Activated CD4-positive, alpha-beta T cell treated with anti-CD3 and anti-CD28 coated beads for 36 hours (primary cell): ENCODE measurements at regions of chr6 and their contacts with region 1.

Region 1: GRCh38 chr6:13661647-13662046 is 46.5 kb downstream of the NOL7 start:
- DNase-seq: no peak
- ATAC-seq: no peak
- H3K4me3 Mint-ChIP-seq: no peak overlapping the region
- H3K27ac Mint-ChIP-seq: no peak overlapping the region
- H3K4me1 Mint-ChIP-seq: peaks cover 77% of the 10 kb centered on the region
- H3K27me3 Mint-ChIP-seq: no peaks in the 10 kb centered on the region

Region 2: GRCh38 chr6:13648851-13649250 is 12.8 kb before region 1 on chr6:
- CTCF ChIA-PET with region 1: interaction called, 10 read pairs
- POLR2A ChIA-PET with region 1: no interaction called
- intact Hi-C with region 1: no loop called
- DNase-seq: no peak
- ATAC-seq: no peak
- H3K4me3 Mint-ChIP-seq: no peak overlapping the region
- H3K27ac Mint-ChIP-seq: no peak overlapping the region
- H3K4me1 Mint-ChIP-seq: peaks cover 13% of the 10 kb centered on the region
- H3K27me3 Mint-ChIP-seq: no peaks in the 10 kb centered on the region

Region 3: GRCh38 chr6:13992417-13993055 is 330.9 kb after region 1 on chr6:
- CTCF ChIA-PET with region 1: no interaction called
- POLR2A ChIA-PET with region 1: no interaction called
- intact Hi-C with region 1: no loop called
- DNase-seq: no peak
- ATAC-seq: no peak
- H3K4me3 Mint-ChIP-seq: no peak overlapping the region
- H3K27ac Mint-ChIP-seq: no peak overlapping the region
- H3K4me1 Mint-ChIP-seq: no peaks in the 10 kb centered on the region
- H3K27me3 Mint-ChIP-seq: peaks cover 35% of the 10 kb centered on the region